ENCODE measurements at regions of chr18 and their contacts with region 1.

Region 1: GRCh38 chr18:13216092-13216582 is 2.4 kb upstream of the LDLRAD4 start:
- DNase-seq: peak in 1 of 4 experiments; percentile 13
- ATAC-seq: peak; percentile 63
- H3K4me3 ChIP-seq: no peak overlapping the region
- H3K27ac ChIP-seq: no peak overlapping the region
- H3K4me1 ChIP-seq: peaks cover 0 to 20% of the 10 kb centered on the region in 2 experiments; a peak in 2 of 5 replicates
- H3K27me3 ChIP-seq: peaks cover 37 to 46% of the 10 kb centered on the region in 2 experiments
- CTCF ChIP-seq: peak; percentile 20 to 35 (median 24); a peak in 3 of 6 replicates
- EP300 ChIP-seq: no peak
- POLR2A ChIP-seq: no peak
- RAD21 ChIP-seq: peak in 1 of 2 experiments; percentile 49; a peak in 2 of 4 replicates

Region 2: DNA sequence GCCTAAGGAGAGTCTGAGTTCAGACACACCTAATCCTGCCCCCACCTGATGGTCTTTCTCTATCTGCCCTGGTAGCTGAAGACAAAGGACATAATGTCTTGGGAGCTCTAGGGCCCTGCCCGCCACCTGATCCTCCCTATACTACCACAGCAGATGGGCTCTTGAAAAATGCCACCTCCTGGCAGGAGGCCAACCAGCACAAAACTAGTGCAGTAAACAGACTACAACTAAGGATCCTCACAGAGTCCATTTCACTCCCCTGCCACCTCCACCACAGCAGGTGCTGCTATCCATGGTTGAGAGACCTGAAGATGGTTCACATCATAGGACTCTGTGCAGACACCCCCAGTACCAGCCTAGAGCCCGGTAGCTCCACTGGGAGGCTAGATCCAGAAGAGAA is 50.1 kb before region 1 on chr18:
- CTCF ChIA-PET with region 1: no interaction called
- POLR2A ChIA-PET with region 1: no interaction called
- in situ Hi-C with region 1: no loop called
- intact Hi-C with region 1: loop called (anchors 10 kb)
- DNase-seq: no peak
- ATAC-seq: no peak
- H3K4me3 ChIP-seq: no peak overlapping the region
- H3K27ac ChIP-seq: no peak overlapping the region
- H3K4me1 ChIP-seq: no peaks in the 10 kb centered on the region
- H3K27me3 ChIP-seq: peaks cover 18 to 38% of the 10 kb centered on the region in 2 experiments
- CTCF ChIP-seq: no peak
- EP300 ChIP-seq: no peak
- POLR2A ChIP-seq: no peak
- RAD21 ChIP-seq: no peak